ENCODE measurements at regions of chr6 and their contacts with region 1.

Region 1: DNA sequence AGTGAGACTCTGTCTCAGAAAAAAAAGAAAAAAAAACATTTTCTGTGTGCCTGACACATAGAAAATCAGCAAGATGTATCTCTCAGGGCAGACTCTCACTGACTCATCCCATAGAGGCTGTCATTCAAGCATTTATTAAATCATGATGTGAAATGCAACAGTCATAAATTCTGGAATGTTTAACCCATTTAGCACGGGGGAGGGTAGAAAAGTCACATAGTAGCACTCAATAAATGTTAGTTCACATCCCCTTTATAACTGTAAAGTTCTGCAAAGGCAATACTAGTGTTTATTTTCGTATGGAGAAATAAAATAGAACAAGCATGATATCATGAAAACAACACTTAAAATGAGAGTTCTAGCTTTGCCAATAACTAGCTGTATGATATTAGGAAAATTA is 15.5 kb upstream of the CARMIL1 start:
- DNase-seq: no peak
- ATAC-seq: no peak
- H3K4me3 Mint-ChIP-seq: no peak overlapping the region
- H3K27ac Mint-ChIP-seq: no peak overlapping the region
- H3K4me1 Mint-ChIP-seq: peaks cover 2% of the 10 kb centered on the region
- H3K27me3 Mint-ChIP-seq: peaks cover 8% of the 10 kb centered on the region

Region 2: GRCh38 chr6:25138237-25139125 is 125.2 kb before region 1 on chr6:
- CTCF ChIA-PET with region 1: no interaction called
- POLR2A ChIA-PET with region 1: no interaction called
- intact Hi-C with region 1: no loop called
- DNase-seq: peak; percentile 81
- ATAC-seq: peak; percentile 93
- H3K4me3 Mint-ChIP-seq: peak overlapping the region; percentile 81
- H3K27ac Mint-ChIP-seq: peak overlapping the region; percentile 97
- H3K4me1 Mint-ChIP-seq: peaks cover 31% of the 10 kb centered on the region
- H3K27me3 Mint-ChIP-seq: no peaks in the 10 kb centered on the region

Region 3: DNA sequence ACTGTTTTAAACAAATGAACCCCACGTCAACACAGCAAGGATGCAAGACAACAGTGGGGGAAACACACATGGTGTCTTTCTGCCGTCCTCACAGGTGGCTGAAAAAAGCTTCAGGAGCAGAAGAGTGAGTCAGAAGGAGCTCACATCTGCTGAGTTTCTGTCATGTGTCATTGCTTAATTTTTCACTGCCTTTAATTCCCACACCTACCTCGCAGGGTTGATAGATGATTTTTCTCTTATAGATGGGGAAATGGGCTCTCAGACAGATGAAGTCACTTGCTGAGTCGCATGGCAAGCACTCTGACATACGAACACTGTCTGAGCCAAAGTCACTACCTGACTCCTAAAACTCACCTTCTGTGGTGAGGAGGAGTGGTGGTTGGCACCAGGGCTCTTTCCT is 12.8 kb before region 1 on chr6:
- CTCF ChIA-PET with region 1: interaction called, 20 read pairs
- POLR2A ChIA-PET with region 1: interaction called, 3 read pairs
- intact Hi-C with region 1: no loop called
- DNase-seq: peak; percentile 64
- ATAC-seq: peak; percentile 98
- H3K4me3 Mint-ChIP-seq: no peak overlapping the region
- H3K27ac Mint-ChIP-seq: no peak overlapping the region
- H3K4me1 Mint-ChIP-seq: peaks cover 22% of the 10 kb centered on the region
- H3K27me3 Mint-ChIP-seq: peaks cover 11% of the 10 kb centered on the region

Region 4: GRCh38 chr6:25490018-25490801 is 226.6 kb after region 1 on chr6:
- CTCF ChIA-PET with region 1: interaction called, 141 read pairs
- POLR2A ChIA-PET with region 1: interaction called, 4 read pairs
- intact Hi-C with region 1: loop called (anchors 1 kb)
- DNase-seq: peak; percentile 81
- ATAC-seq: peak; percentile 86
- H3K4me3 Mint-ChIP-seq: no peak overlapping the region
- H3K27ac Mint-ChIP-seq: no peak overlapping the region
- H3K4me1 Mint-ChIP-seq: peaks cover 4% of the 10 kb centered on the region
- H3K27me3 Mint-ChIP-seq: no peaks in the 10 kb centered on the region

Region 5: DNA sequence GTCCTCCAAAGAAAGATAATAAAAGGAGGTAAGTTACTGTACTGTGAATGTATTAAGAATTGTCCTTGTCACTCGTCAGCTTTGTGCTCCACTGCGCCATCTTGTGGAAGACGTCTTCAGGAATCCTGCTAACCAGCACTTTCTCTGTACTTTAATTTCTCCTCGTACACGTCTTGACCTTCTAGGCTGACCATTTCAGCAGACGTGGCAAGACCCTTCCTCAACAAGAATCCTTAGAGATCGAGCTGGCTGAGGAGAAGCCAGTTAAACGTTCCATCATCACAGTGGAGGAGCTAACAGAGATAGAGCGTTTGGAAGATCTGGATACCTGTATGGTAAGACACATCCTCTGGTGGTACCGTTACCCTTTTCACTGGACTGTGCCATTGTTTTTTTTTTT is 292.9 kb after region 1 on chr6:
- CTCF ChIA-PET with region 1: interaction called, 45 read pairs
- POLR2A ChIA-PET with region 1: no interaction called
- intact Hi-C with region 1: loop called (anchors 1 kb)
- DNase-seq: peak; percentile 90
- ATAC-seq: peak; percentile 66
- H3K4me3 Mint-ChIP-seq: no peak overlapping the region
- H3K27ac Mint-ChIP-seq: no peak overlapping the region
- H3K4me1 Mint-ChIP-seq: peaks cover 2% of the 10 kb centered on the region
- H3K27me3 Mint-ChIP-seq: no peaks in the 10 kb centered on the region

Region 6: GRCh38 chr6:25942561-25943147 is 679.0 kb after region 1 on chr6:
- CTCF ChIA-PET with region 1: no interaction called
- POLR2A ChIA-PET with region 1: no interaction called
- intact Hi-C with region 1: loop called in 1 of 2 experiments (anchors 5 kb)
- DNase-seq: no peak
- ATAC-seq: peak; percentile 70
- H3K4me3 Mint-ChIP-seq: no peak overlapping the region
- H3K27ac Mint-ChIP-seq: no peak overlapping the region
- H3K4me1 Mint-ChIP-seq: peaks cover 22% of the 10 kb centered on the region
- H3K27me3 Mint-ChIP-seq: peaks cover 4% of the 10 kb centered on the region